Activated CD4-positive, alpha-beta T cell treated with anti-CD3 and anti-CD28 coated beads, Interleukin-2, amount 10 ng/mL, durations not matched to agents 24 days and 14 days (primary cell): ENCODE measurements at regions of chr2 and their contacts with region 1.

Region 1: DNA sequence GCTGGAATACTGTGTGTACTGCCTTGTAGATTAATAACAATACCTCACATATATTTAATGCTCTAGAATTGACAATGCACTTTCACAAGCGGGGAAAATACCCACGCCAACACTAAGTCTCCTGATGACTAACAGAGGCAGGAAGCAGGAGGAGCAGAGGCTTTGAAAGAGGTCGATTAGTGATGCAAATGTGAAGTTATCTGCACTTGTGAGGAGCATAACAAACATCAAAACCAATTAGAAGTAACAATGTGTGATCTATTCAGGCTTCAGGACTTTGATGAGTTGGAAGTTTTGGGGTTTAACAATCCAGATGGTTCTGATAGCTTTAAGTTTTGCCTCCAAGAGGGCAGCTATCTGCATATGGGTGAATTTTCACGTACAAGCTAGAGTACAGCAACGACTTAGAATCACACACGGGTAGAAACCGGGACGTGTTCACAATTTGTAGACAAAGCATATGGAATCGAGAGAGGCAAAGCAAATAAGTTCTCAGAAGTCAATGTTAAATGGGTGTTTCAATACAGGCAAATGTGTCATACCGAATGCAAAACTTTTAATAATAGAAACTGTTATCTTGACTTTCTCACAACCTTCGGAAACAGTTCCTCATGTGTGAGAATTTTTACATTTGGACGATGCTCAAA is 114.5 kb downstream of the METTL8 start:
- DNase-seq: peak; percentile 85
- H3K4me3 Mint-ChIP-seq: peak overlapping the region; percentile 76
- H3K27ac Mint-ChIP-seq: peak overlapping the region; percentile 100
- H3K4me1 Mint-ChIP-seq: peaks cover 50% of the 10 kb centered on the region
- H3K27me3 Mint-ChIP-seq: no peaks in the 10 kb centered on the region

Region 2: DNA sequence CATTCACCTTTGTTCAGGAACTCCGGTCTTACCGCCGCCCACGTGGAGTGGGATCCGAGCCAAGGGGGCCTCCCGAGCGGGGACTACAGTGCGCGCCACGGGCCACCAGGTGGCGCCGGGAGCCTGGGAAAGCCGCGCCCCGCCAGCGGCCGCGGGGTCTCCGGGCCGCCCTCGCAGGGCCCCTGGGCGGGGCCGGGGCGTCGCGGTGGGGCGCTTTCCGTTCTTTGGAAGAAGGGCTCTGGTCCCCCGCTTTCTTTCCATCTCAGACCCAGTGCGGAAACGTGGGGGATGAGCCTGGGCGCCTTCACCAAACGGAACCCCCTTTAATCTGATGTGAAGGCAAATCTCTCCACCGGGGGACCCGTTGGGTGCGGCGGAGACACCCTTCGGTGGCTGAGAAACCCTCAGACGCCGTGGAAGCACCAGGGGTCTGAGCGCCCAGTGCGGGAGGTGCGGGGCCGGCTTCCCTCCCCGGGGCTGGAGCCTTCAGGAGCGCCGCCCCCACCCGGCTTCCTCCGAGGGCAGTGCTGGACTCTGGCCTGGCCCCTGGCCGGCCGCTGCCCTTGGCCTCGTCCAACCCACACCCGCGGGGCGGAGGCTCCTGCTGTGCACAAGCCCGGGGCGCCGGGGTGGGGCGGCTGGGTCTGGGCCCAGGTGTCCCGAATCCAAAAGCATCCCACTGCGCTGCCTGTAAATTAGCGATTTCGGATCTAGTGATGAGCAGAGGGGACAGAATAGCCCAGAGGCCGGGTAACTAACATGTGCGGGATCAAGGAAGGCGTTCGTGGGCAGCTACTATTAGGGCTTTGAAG is 345.6 kb before region 1 on chr2:
- intact Hi-C with region 1: loop called (anchors 2 kb)
- DNase-seq: peak; percentile 96
- H3K4me3 Mint-ChIP-seq: peak overlapping the region; percentile 82
- H3K27ac Mint-ChIP-seq: peak overlapping the region; percentile 56
- H3K4me1 Mint-ChIP-seq: peaks cover 10% of the 10 kb centered on the region
- H3K27me3 Mint-ChIP-seq: peaks cover 3% of the 10 kb centered on the region

Region 3: GRCh38 chr2:171095014-171095582 is 224.2 kb before region 1 on chr2:
- intact Hi-C with region 1: loop called (anchors 2 kb)
- DNase-seq: no peak
- H3K4me3 Mint-ChIP-seq: peak overlapping the region; percentile 7
- H3K27ac Mint-ChIP-seq: peak overlapping the region; percentile 72
- H3K4me1 Mint-ChIP-seq: peaks cover 26% of the 10 kb centered on the region
- H3K27me3 Mint-ChIP-seq: no peaks in the 10 kb centered on the region

Region 4: GRCh38 chr2:171173089-171173488 is 146.2 kb before region 1 on chr2:
- intact Hi-C with region 1: loop called (anchors 1 kb)
- DNase-seq: no peak
- H3K4me3 Mint-ChIP-seq: no peak overlapping the region
- H3K27ac Mint-ChIP-seq: no peak overlapping the region
- H3K4me1 Mint-ChIP-seq: peaks cover 4% of the 10 kb centered on the region
- H3K27me3 Mint-ChIP-seq: peaks cover 5% of the 10 kb centered on the region

Region 5: GRCh38 chr2:171347591-171348032 is 28.3 kb after region 1 on chr2:
- intact Hi-C with region 1: loop called (anchors 1 kb)
- DNase-seq: no peak
- H3K4me3 Mint-ChIP-seq: no peak overlapping the region
- H3K27ac Mint-ChIP-seq: peak overlapping the region; percentile 76
- H3K4me1 Mint-ChIP-seq: peaks cover 23% of the 10 kb centered on the region
- H3K27me3 Mint-ChIP-seq: no peaks in the 10 kb centered on the region

Region 6: DNA sequence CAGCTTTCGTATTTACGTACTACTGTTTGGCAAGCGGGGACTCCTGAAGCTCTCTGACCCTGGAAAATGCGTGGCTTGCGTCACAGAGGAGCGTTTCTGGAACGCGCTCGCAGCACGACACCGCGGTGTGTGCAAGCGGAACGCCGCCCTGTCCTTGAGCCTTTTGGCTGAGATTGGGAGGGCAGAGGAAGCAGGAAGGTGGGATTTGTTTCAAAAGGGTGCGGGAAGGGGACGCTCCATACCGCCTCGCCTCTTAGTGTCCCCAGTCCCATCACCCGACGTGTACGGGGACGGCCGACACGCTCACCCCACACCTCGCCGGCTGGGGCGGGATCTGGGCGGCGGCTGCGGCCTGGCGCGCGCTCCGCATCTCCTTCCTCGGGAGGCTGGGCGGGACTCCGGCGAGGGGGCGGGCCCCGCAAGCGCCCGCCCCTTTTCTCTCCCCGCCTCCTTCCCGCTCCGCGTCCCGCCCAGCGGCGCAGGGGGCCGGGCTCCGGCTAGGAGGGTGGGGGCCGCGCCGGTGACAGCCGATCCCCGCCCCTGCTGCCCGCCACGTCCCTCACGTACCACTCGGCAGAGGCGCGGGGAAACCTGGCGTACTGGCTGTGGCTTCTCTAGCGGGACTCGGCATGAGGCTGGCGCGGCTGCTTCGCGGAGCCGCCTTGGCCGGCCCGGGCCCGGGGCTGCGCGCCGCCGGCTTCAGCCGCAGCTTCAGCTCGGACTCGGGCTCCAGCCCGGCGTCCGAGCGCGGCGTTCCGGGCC is 1236.4 kb after region 1 on chr2 and contains the start of gene PDK1:
- intact Hi-C with region 1: loop called (anchors 5 kb)
- DNase-seq: peak; percentile 97
- H3K4me3 Mint-ChIP-seq: peak within 1 kb of the TSS; percentile 98
- H3K27ac Mint-ChIP-seq: peak within 1 kb of the TSS; percentile 97
- H3K4me1 Mint-ChIP-seq: peaks cover 53% of the 10 kb centered on the region
- H3K27me3 Mint-ChIP-seq: no peaks in the 10 kb centered on the region
- total RNA-seq, gene PDK1: 42.6 and 46.9 TPM in 2 replicates